T-cell (primary cell): ENCODE measurements at regions of chr3 and their contacts with region 1.

Region 1: GRCh38 chr3:66394019-66394752 is 106.6 kb downstream of the LRIG1 start:
- DNase-seq: peak; percentile 45 to 78 (median 62)
- ATAC-seq: peak; percentile 96 to 98 (median 97)
- H3K4me3 ChIP-seq: peak overlapping the region; percentile 26 to 35
- H3K4me3 Mint-ChIP-seq: peak overlapping the region; percentile 84 to 85 (median 84)
- H3K27ac ChIP-seq: peak overlapping the region; percentile 55
- H3K27ac Mint-ChIP-seq: peak overlapping the region; percentile 96 to 99
- H3K4me1 ChIP-seq: peaks cover 7 to 30% of the 10 kb centered on the region in 2 experiments
- H3K4me1 Mint-ChIP-seq: peaks cover 59 to 60% (median 59%) of the 10 kb centered on the region in 3 donors
- H3K27me3 ChIP-seq: no peaks in the 10 kb centered on the region
- H3K27me3 Mint-ChIP-seq: no peaks in the 10 kb centered on the region

Region 2: GRCh38 chr3:66407611-66408218 is 13.5 kb after region 1 on chr3:
- CTCF ChIA-PET with region 1: interaction called, 5 to 12 read pairs
- POLR2A ChIA-PET with region 1: no interaction called
- DNase-seq: peak; percentile 29 to 80 (median 67)
- ATAC-seq: peak; percentile 75 to 85 (median 80)
- H3K4me3 ChIP-seq: no peak overlapping the region
- H3K4me3 Mint-ChIP-seq: no peak overlapping the region
- H3K27ac ChIP-seq: no peak overlapping the region
- H3K27ac Mint-ChIP-seq: peak overlapping the region in 1 of 2 donors; percentile 15
- H3K4me1 ChIP-seq: peaks cover 0 to 8% of the 10 kb centered on the region in 2 experiments
- H3K4me1 Mint-ChIP-seq: peaks cover 0 to 3% (median 3%) of the 10 kb centered on the region in 3 donors
- H3K27me3 ChIP-seq: no peaks in the 10 kb centered on the region
- H3K27me3 Mint-ChIP-seq: no peaks in the 10 kb centered on the region